GM10248 (cell line): ENCODE measurements at regions of chr17 and their contacts with region 1.

Region 1: GRCh38 chr17:2380226-2380922 is 20.5 kb downstream of the MNT start:
- DNase-seq: no peak
- CTCF ChIP-seq: no peak

Region 2: GRCh38 chr17:2064980-2065785 is 315.2 kb before region 1 on chr17:
- CTCF ChIA-PET with region 1: no interaction called
- POLR2A ChIA-PET with region 1: no interaction called
- DNase-seq: peak; percentile 78
- CTCF ChIP-seq: peak; percentile 70

Region 3: GRCh38 chr17:2361010-2361760 is 19.2 kb before region 1 on chr17:
- CTCF ChIA-PET with region 1: interaction called, 32 read pairs
- POLR2A ChIA-PET with region 1: no interaction called
- DNase-seq: no peak
- CTCF ChIP-seq: no peak

Region 4: GRCh38 chr17:2369551-2370210 is 10.7 kb before region 1 on chr17:
- CTCF ChIA-PET with region 1: interaction called, 39 read pairs
- POLR2A ChIA-PET with region 1: no interaction called
- DNase-seq: no peak
- CTCF ChIP-seq: no peak

Region 5: GRCh38 chr17:2392252-2393173 is 12.1 kb after region 1 on chr17:
- CTCF ChIA-PET with region 1: interaction called, 78 read pairs
- POLR2A ChIA-PET with region 1: interaction called, 15 read pairs
- DNase-seq: peak; percentile 95
- CTCF ChIP-seq: no peak

Region 6: GRCh38 chr17:2401426-2402221 is 21.2 kb after region 1 on chr17:
- CTCF ChIA-PET with region 1: interaction called, 37 read pairs
- POLR2A ChIA-PET with region 1: interaction called, 3 read pairs
- DNase-seq: peak; percentile 93
- CTCF ChIP-seq: no peak

Region 7: GRCh38 chr17:2406903-2407790 is 26.8 kb after region 1 on chr17:
- CTCF ChIA-PET with region 1: interaction called, 404 read pairs
- POLR2A ChIA-PET with region 1: no interaction called
- DNase-seq: no peak
- CTCF ChIP-seq: no peak

Region 8: DNA sequence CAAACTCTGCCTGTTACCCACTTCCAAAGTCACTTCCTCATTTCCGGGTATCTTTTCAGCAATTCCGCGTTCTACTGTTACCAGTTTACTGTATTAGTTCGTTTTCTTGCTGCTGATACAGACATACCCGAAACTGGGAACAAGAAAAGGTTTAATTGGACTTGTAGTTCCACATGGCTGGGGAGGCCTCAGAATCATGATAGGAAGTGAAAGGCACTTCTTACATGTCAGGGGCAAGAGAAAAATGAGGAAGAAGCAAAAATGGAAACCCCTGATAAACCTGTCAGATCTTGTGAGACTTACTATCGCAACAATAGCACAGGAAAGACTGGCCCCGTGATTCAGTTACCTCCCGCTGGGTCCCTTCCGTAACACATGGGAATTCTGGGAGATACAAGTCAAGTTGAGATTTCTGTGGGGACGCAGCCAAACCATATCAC is 243.9 kb after region 1 on chr17:
- CTCF ChIA-PET with region 1: no interaction called
- POLR2A ChIA-PET with region 1: no interaction called
- DNase-seq: no peak
- CTCF ChIP-seq: no peak